Common myeloid progenitor, CD34-positive (primary cell): ENCODE measurements at regions of chr19 and their contacts with region 1.

Region 1: GRCh38 chr19:45526143-45526542 is 18.9 kb downstream of the VASP start:
- DNase-seq: no peak
- H3K4me3 ChIP-seq: no peak overlapping the region
- H3K27ac ChIP-seq: no peak overlapping the region
- H3K4me1 ChIP-seq: peaks cover 0 to 12% (median 5%) of the 10 kb centered on the region in 4 experiments
- H3K27me3 ChIP-seq: peaks cover 0 to 10% (median 3%) of the 10 kb centered on the region in 5 experiments

Region 2: GRCh38 chr19:45485305-45486077 is 40.7 kb before region 1 on chr19:
- CTCF ChIA-PET with region 1: no interaction called
- POLR2A ChIA-PET with region 1: no interaction called
- DNase-seq: peak; percentile 94 to 96 (median 94)
- H3K4me3 ChIP-seq: peak overlapping the region; percentile 41 to 86 (median 71)
- H3K27ac ChIP-seq: peak overlapping the region in 1 of 2 experiments; percentile 76
- H3K4me1 ChIP-seq: peaks cover 0 to 8% (median 6%) of the 10 kb centered on the region in 4 experiments
- H3K27me3 ChIP-seq: no peaks in the 10 kb centered on the region

Region 3: DNA sequence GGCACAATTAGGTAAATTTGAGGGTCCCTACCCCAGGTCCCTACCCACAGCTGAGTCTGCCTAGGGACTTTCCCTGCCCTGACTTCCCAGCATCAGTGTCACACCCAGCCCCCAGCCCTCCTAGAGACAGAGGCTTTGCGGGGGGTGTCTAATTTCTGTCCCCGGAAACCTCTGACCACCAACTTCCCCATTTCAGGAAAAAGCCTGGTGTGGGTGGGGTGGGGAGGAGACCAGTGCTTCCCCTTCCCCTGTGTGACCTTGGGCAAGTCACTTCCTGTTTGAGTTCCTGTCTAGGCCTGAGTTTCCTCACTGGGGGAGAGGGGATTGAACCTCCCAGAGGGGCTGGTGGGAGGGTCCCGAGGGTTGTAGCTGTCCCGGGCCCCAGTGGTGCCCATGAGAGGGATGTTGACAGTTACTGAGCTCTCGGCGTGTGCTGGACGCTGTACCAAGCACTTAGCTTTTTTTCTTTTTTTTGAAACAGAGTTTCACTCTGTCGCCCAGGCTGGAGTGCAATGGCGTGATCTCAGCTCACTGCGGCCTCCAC is 11.0 kb before region 1 on chr19:
- CTCF ChIA-PET with region 1: interaction called, 11 read pairs
- POLR2A ChIA-PET with region 1: no interaction called
- DNase-seq: peak; percentile 72 to 84 (median 82)
- H3K4me3 ChIP-seq: peak overlapping the region in 3 of 7 experiments; percentile 24 to 43 (median 38)
- H3K27ac ChIP-seq: peak overlapping the region; percentile 27 to 35
- H3K4me1 ChIP-seq: peaks cover 8 to 55% (median 41%) of the 10 kb centered on the region in 4 experiments
- H3K27me3 ChIP-seq: no peaks in the 10 kb centered on the region

Region 4: DNA sequence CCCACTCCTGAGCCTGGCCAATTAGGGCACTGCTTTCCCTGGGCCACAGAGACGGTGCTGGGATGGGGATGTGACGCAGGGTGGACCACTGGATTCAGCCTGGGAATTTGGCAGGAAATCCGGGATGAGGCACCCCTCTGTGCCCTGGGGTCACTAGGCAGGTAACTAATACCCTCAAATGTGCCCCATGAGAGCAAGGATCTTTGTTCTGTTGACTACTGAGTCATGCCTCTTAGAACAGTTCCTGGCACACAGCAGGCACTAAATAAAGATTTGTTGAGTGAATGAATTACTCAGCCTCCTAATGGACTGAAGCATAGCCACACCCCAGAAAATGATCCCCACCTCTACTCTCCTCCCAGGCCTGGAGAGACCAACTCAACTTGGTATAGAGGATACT is 42.6 kb after region 1 on chr19:
- CTCF ChIA-PET with region 1: no interaction called
- POLR2A ChIA-PET with region 1: no interaction called
- DNase-seq: no peak
- H3K4me3 ChIP-seq: no peak overlapping the region
- H3K27ac ChIP-seq: no peak overlapping the region
- H3K4me1 ChIP-seq: peaks cover 0 to 5% (median 2%) of the 10 kb centered on the region in 4 experiments
- H3K27me3 ChIP-seq: no peaks in the 10 kb centered on the region